Activated CD4-positive, alpha-beta T cell treated with anti-CD3 and anti-CD28 coated beads, Interleukin-2, amount 10 ng/mL, durations not matched to agents 24 days and 14 days (primary cell): ENCODE measurements at regions of chr7 and their contacts with region 1.

Region 1: GRCh38 chr7:106041140-106041717 is 70.9 kb downstream of the SYPL1 start:
- DNase-seq: peak; percentile 73
- H3K4me3 Mint-ChIP-seq: no peak overlapping the region
- H3K27ac Mint-ChIP-seq: no peak overlapping the region
- H3K4me1 Mint-ChIP-seq: peaks cover 9% of the 10 kb centered on the region
- H3K27me3 Mint-ChIP-seq: peaks cover 32% of the 10 kb centered on the region

Region 2: DNA sequence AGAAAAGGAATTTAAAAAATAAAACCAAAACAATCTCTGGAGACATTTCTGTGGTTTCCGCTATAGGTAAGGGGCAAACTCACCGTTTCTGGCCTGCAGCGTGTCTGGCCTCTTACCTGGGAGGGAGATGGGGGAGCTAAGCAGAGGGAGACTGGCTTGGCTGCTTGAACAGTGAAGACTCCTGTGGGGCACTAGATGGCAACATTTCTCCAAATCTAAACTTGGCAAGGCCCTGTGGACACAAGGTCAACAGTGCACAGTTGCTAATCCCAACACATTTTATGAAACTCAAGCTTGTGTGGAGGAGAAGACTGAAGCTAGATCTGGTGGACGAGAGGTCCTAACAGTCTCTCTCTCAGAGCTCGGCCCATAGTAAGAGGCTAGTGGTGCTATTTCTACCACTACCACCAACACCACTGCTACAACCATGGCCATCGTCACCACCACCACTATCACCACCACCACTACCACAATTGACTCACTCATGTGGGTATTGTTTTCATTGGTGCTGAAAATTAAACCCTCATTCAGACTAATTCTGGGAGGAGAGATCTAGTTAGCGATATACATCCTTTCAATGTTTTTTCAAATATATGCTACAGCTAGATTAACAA is 106.5 kb before region 1 on chr7:
- intact Hi-C with region 1: loop called (anchors 1 kb)
- DNase-seq: no peak
- H3K4me3 Mint-ChIP-seq: no peak overlapping the region
- H3K27ac Mint-ChIP-seq: no peak overlapping the region
- H3K4me1 Mint-ChIP-seq: peaks cover 6% of the 10 kb centered on the region
- H3K27me3 Mint-ChIP-seq: peaks cover 32% of the 10 kb centered on the region

Region 3: DNA sequence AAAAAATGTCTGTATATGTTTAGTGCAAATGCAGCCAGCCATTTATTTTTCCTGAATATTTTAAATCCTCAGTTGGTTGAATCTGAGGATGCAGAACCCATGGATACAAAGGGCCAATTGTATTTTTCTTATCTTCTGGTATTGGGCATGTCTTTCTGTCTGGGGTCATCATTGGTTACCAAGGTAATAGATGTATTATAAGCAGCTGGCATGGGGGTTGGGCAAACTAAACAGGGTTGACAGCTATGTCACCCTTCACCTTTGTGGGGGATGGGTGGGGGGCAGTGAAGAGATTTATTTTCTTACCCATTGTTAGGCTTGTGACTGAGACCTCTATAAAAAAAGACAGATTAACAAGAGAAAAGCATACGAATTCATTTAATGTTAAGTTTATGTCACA is 39.3 kb before region 1 on chr7:
- intact Hi-C with region 1: no loop called
- DNase-seq: no peak
- H3K4me3 Mint-ChIP-seq: no peak overlapping the region
- H3K27ac Mint-ChIP-seq: no peak overlapping the region
- H3K4me1 Mint-ChIP-seq: no peaks in the 10 kb centered on the region
- H3K27me3 Mint-ChIP-seq: peaks cover 28% of the 10 kb centered on the region

Region 4: DNA sequence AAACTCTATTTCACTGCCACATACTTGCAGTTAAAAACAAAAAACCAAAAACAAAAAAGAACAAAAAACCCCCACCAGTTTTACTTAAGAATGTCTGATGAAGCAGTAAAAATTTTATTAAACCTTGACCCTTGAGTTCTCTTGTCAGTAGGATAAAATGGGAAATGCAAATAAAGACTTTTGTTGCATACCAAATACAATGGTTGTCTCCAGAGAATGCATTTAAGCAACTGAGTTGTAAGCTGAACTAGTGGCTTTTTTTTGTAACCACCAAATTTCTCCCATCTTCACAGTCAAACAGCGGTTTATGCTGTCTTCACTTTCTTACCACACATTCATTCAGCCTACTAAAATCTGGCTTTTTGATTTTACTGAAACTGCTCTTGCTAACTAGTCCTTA is 67.8 kb after region 1 on chr7:
- intact Hi-C with region 1: no loop called
- DNase-seq: peak; percentile 58
- H3K4me3 Mint-ChIP-seq: no peak overlapping the region
- H3K27ac Mint-ChIP-seq: no peak overlapping the region
- H3K4me1 Mint-ChIP-seq: peaks cover 46% of the 10 kb centered on the region
- H3K27me3 Mint-ChIP-seq: peaks cover 3% of the 10 kb centered on the region